Mammary epithelial cell (primary cell): ENCODE measurements at regions of chr16 and their contacts with region 1.

Region 1: GRCh38 chr16:30740364-30741251 is 7.6 kb upstream of the PHKG2 start:
- DNase-seq: peak; percentile 98
- H3K4me3 ChIP-seq: peak overlapping the region; percentile 75 to 88 (median 81)
- H3K27ac ChIP-seq: peak overlapping the region; percentile 100
- H3K4me1 ChIP-seq: peaks cover 34% of the 10 kb centered on the region
- H3K27me3 ChIP-seq: no peaks in the 10 kb centered on the region
- CTCF ChIP-seq: no peak

Region 2: DNA sequence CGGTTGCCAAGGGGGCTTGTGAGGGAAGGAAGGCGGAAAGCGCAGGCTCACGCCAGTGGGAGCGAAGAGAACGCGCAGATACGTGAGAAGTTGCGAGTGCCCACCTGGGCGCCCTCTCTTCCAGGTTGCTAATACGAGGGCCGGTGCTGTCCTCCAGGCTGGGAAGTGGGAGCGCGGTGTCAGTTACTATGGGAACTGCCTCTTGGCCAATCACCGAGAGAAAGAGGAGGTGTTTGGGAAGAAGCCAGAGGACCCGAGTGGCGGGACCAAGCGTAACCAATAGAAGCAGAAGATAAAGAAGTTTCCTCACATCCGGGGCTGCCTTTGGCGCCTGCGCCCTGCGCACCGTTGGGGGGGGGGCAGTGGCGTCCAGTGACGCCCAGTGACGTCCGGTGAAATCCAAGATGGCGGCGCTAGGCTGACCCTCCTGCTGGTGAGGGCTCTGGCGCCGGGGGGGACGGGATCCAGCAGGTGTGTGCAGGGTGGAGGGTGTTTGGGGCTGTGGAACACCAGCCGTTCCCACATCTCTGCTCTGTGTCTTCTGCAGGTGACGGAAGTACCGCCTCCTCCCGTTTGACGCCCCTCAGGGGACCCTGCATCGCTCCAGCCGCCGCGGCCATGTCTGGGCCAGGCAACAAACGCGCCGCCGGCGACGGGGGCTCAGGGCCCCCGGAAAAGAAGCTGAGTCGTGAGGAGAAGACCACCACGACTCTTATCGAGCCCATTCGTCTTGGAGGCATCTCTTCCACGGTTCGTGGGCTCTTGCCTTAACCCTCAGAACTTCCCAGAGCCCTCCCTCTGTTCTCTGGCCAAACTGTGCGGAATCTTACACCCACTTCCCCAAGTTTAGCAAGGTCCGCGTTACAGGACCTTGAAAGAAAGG is 21.6 kb after region 1 on chr16 and contains the starts of genes CFAP119 and RNF40:
- CTCF ChIA-PET with region 1: no interaction called
- dilution Hi-C with region 1: no loop called
- in situ Hi-C with region 1: no loop called
- intact Hi-C with region 1: loop called (anchors 1 kb)
- DNase-seq: peak; percentile 97
- H3K4me3 ChIP-seq: peak within 1 kb of the TSS; percentile 46 to 66 (median 55)
- H3K27ac ChIP-seq: peak within 1 kb of the TSS; percentile 61
- H3K4me1 ChIP-seq: peaks cover 27% of the 10 kb centered on the region
- H3K27me3 ChIP-seq: no peaks in the 10 kb centered on the region
- CTCF ChIP-seq: no peak
- total RNA-seq, gene CFAP119: 1.5 to 8.3 TPM
- total RNA-seq, gene RNF40: 62.8 to 66.4 TPM

Region 3: GRCh38 chr16:30786936-30787612 is 46.5 kb after region 1 on chr16 and contains the start of gene ZNF629:
- CTCF ChIA-PET with region 1: no interaction called
- dilution Hi-C with region 1: no loop called
- in situ Hi-C with region 1: no loop called
- intact Hi-C with region 1: loop called (anchors 2 kb)
- DNase-seq: peak; percentile 49
- H3K4me3 ChIP-seq: peak within 1 kb of the TSS; percentile 72 to 87 (median 86)
- H3K27ac ChIP-seq: peak within 1 kb of the TSS; percentile 59
- H3K4me1 ChIP-seq: peaks cover 12% of the 10 kb centered on the region
- H3K27me3 ChIP-seq: no peaks in the 10 kb centered on the region
- CTCF ChIP-seq: no peak
- total RNA-seq, gene ZNF629: 13.6 to 19.2 TPM

Region 4: GRCh38 chr16:30813821-30814189 is 73.2 kb after region 1 on chr16:
- CTCF ChIA-PET with region 1: interaction called, 3 read pairs
- dilution Hi-C with region 1: no loop called
- in situ Hi-C with region 1: no loop called
- intact Hi-C with region 1: loop called (anchors 1 kb)
- DNase-seq: no peak
- H3K4me3 ChIP-seq: peak overlapping the region; percentile 37 to 62 (median 48)
- H3K27ac ChIP-seq: peak overlapping the region; percentile 24
- H3K4me1 ChIP-seq: peaks cover 11% of the 10 kb centered on the region
- H3K27me3 ChIP-seq: no peaks in the 10 kb centered on the region
- CTCF ChIP-seq: no peak